PC-9 (cell line): ENCODE measurements at regions of chr21 and their contacts with region 1.

Region 1: GRCh38 chr21:37463083-37463801 is 96.7 kb downstream of the DYRK1A start:
- DNase-seq: peak in 1 of 2 experiments; percentile 41
- H3K4me3 ChIP-seq: no peak overlapping the region
- H3K27ac ChIP-seq: 0 out of 2 replicates have a peak overlapping the region, but pooled peaks have one; percentile 37
- H3K4me1 ChIP-seq: no peaks in the 10 kb centered on the region
- H3K27me3 ChIP-seq: no peaks in the 10 kb centered on the region
- CTCF ChIP-seq: peak; percentile 77

Region 2: GRCh38 chr21:37006521-37007291 is 456.5 kb before region 1 on chr21 and contains the start of gene RIPPLY3:
- CTCF ChIA-PET with region 1: no interaction called
- POLR2A ChIA-PET with region 1: no interaction called
- intact Hi-C with region 1: no loop called
- DNase-seq: no peak
- H3K4me3 ChIP-seq: no peak within 1 kb of the TSS
- H3K27ac ChIP-seq: no peak within 1 kb of the TSS
- H3K4me1 ChIP-seq: no peaks in the 10 kb centered on the region
- H3K27me3 ChIP-seq: no peaks in the 10 kb centered on the region
- CTCF ChIP-seq: no peak
- total RNA-seq, gene RIPPLY3: 0.17 TPM in 1 of 2 replicates, not detected in the other

Region 3: DNA sequence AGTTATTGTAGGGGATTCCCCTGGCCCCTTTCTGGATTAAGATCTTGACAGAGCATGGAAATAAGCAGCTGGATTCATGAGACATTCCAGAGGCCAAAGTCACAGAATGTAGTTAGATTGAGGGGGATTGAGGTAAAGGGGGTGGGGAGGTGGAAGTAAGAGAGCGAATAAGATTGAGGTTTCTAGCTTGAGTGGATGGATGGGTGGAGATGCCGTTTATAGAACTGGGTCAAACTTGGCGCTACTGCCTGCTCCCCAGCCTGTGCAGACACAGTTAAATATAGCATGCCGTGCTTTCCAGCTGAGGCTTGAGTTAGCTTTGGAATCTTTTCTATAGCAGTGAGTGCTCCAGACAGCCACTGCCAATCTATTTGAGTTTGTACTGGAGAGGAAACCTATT is 11.0 kb before region 1 on chr21:
- CTCF ChIA-PET with region 1: interaction called, 14 read pairs
- POLR2A ChIA-PET with region 1: no interaction called
- intact Hi-C with region 1: no loop called
- DNase-seq: no peak
- H3K4me3 ChIP-seq: no peak overlapping the region
- H3K27ac ChIP-seq: no peak overlapping the region
- H3K4me1 ChIP-seq: peaks cover 34% of the 10 kb centered on the region
- H3K27me3 ChIP-seq: no peaks in the 10 kb centered on the region
- CTCF ChIP-seq: no peak

Region 4: DNA sequence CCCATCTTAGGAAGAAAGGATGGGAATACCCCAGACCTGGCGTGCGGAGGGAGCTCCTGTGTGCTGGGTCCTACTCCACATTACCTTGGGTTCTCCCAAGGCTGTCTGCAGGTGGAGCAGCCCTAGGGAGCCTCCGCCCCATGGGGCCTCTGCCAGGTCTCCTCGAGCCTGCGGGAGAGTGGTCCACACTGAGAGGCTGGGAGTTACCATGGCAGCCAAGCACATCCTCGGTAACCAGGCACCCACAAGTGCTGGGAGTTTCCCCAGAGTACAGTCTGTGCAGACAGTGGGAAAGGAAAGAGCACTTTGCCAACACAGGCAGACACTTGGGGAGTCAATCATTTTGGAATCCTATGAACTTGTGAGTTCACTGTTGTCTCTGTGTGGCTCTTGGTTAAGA is 152.7 kb after region 1 on chr21:
- CTCF ChIA-PET with region 1: no interaction called
- POLR2A ChIA-PET with region 1: no interaction called
- intact Hi-C with region 1: no loop called
- DNase-seq: no peak
- H3K4me3 ChIP-seq: no peak overlapping the region
- H3K27ac ChIP-seq: no peak overlapping the region
- H3K4me1 ChIP-seq: no peaks in the 10 kb centered on the region
- H3K27me3 ChIP-seq: no peaks in the 10 kb centered on the region
- CTCF ChIP-seq: no peak